ENCODE measurements at regions of chr10 and their contacts with region 1.

Region 1: GRCh38 chr10:50224330-50224952 is 26.9 kb downstream of the ASAH2 start:
- DNase-seq: peak in 1 of 3 donors; percentile 40
- ATAC-seq: peak; percentile 80
- H3K4me3 ChIP-seq: no peak overlapping the region
- H3K4me1 ChIP-seq: no peaks in the 10 kb centered on the region
- CTCF ChIP-seq: no peak

Region 2: GRCh38 chr10:49592726-49593563 is 631.5 kb before region 1 on chr10:
- intact Hi-C with region 1: loop called in 1 of 2 experiments (anchors 10 kb)
- DNase-seq: peak in 2 of 3 donors; percentile 62 to 67
- ATAC-seq: peak; percentile 84
- H3K4me3 ChIP-seq: no peak overlapping the region
- H3K4me1 ChIP-seq: no peaks in the 10 kb centered on the region
- CTCF ChIP-seq: peak; percentile 78

Measured in mucosa of descending colon (tissue), 3 donors.